Activated CD4-positive, alpha-beta memory T cell treated with anti-CD3 and anti-CD28 coated beads, Interleukin-2, amount 10 ng/mL, durations not matched to agents 7 days and 5 days (primary cell): ENCODE measurements at regions of chr16 and their contacts with region 1.

Region 1: DNA sequence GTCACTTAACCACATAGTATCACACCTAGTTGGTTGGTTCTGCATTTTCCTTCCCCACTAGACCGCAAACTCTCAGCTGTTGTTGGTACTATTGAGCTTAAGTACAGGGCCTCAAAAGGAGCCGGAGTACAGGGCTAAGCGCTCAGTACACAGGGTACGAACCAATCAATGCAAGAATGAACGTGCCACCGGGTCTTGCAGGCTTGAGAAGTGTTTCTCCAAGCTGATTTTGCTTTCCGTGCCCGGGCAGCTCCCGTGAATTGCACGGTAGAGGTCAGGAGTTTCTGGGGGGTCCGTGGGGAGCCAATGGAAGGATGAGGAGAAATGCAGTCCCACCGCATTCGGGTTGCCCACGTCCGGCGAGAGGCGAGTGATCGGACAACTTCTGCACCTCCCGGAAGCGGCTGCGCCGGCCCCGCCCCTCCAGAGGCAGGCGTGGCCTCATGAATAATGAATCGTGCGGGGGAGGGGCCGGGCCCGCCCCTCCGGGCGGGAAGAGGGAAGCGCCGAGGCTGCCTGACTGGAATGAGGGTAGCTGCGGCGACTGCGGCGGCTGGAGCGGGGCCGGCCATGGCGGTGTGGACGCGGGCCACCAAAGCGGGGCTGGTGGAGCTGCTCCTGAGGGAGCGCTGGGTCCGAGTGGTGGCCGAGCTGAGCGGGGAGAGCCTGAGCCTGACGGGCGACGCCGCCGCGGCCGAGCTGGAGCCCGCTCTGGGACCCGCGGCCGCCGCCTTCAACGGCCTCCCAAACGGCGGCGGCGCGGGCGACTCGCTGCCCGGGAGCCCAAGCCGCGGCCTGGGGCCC is at the start of gene SNTB2:
- DNase-seq: peak; percentile 90
- H3K4me3 Mint-ChIP-seq: peak within 1 kb of the TSS; percentile 99
- H3K27ac Mint-ChIP-seq: peak within 1 kb of the TSS; percentile 100
- H3K4me1 Mint-ChIP-seq: peaks cover 46% of the 10 kb centered on the region
- H3K27me3 Mint-ChIP-seq: no peaks in the 10 kb centered on the region
- total RNA-seq, gene SNTB2: 23.3 to 25.9 TPM

Region 2: GRCh38 chr16:69064764-69065313 is 122.0 kb before region 1 on chr16:
- CTCF ChIA-PET with region 1: no interaction called
- POLR2A ChIA-PET with region 1: no interaction called
- DNase-seq: no peak
- H3K4me3 Mint-ChIP-seq: no peak overlapping the region
- H3K27ac Mint-ChIP-seq: no peak overlapping the region
- H3K4me1 Mint-ChIP-seq: no peaks in the 10 kb centered on the region
- H3K27me3 Mint-ChIP-seq: no peaks in the 10 kb centered on the region

Region 3: GRCh38 chr16:69132424-69133252 is 54.2 kb before region 1 on chr16 and contains the starts of genes CHTF8 and UTP4:
- CTCF ChIA-PET with region 1: interaction called, 4 read pairs
- POLR2A ChIA-PET with region 1: interaction called, 28 read pairs
- DNase-seq: peak; percentile 88
- H3K4me3 Mint-ChIP-seq: peak within 1 kb of the TSS; percentile 93
- H3K27ac Mint-ChIP-seq: peak within 1 kb of the TSS; percentile 81
- H3K4me1 Mint-ChIP-seq: peaks cover 59% of the 10 kb centered on the region
- H3K27me3 Mint-ChIP-seq: no peaks in the 10 kb centered on the region
- total RNA-seq, gene CHTF8: 133 to 138 TPM
- total RNA-seq, gene UTP4: 39.7 to 48.7 TPM

Region 4: DNA sequence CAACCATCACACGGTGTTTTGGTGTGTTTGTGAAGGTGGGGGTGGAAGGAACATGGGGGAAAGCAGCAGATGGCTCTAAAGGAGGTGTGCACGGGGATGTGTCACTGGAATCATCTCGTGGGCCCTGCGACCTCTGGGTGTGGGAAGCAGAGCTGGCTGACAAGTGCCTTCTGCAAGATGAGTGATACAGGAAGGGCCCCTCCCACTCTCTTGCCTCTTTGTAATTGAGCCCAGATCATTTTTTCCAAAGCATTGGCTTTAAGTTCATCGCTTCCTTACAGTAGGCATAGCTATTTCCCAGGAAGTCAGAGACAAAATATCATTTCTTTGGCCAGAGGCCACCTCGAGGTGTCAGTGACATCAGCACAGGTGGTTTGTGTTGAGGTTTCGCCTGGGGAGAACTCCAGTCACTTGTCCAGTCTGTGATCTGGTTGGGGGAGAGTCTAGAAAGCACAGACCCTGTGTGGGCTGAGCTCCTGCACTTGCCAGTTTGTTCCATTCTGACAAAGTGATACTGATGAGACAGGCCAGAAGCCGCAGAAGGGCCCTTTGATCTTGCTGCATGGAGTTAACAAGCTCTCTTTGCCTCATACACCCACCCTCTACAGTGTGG is 20.5 kb before region 1 on chr16:
- CTCF ChIA-PET with region 1: interaction called, 9 read pairs
- POLR2A ChIA-PET with region 1: interaction called, 33 read pairs
- DNase-seq: peak; percentile 48
- H3K4me3 Mint-ChIP-seq: no peak overlapping the region
- H3K27ac Mint-ChIP-seq: peak overlapping the region; percentile 69
- H3K4me1 Mint-ChIP-seq: peaks cover 37% of the 10 kb centered on the region
- H3K27me3 Mint-ChIP-seq: no peaks in the 10 kb centered on the region

Region 5: DNA sequence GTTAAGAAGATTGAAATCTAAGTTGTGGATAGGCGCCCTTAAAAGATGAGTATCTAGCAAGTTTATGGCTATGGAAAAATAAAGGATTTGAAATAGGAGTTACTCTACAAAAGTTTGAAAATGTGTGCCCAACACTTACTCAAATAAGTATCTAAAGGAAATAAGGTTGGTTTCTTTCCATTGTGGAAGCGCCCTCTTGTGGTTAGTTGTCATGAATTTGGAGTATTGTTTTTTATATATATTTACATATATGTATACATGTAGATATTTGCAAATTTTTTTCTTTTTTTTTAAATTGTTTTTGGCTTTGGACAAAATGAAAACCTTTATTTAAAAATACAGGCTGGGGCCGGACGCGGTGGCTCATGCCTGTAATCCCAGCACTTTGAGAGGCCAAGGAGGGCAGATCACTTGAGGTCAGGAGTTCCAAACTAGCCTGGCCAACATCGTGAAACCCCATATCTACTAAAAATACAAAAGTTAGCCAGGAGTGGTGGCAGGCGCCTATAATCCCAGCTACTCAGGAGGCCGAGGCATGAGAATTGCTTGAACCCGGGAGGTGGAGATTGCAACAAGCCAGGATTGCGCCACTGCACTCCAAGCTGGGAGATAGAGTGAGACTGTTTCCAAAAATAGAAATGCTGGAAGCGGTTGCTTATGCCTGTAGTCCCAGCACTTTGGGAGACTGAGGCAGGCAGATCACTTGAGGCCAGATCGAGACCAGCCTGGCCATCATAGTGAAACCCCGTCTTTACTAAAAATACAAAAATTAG is 100.3 kb after region 1 on chr16:
- CTCF ChIA-PET with region 1: interaction called, 10 read pairs
- POLR2A ChIA-PET with region 1: interaction called, 3 read pairs
- DNase-seq: no peak
- H3K4me3 Mint-ChIP-seq: no peak overlapping the region
- H3K27ac Mint-ChIP-seq: no peak overlapping the region
- H3K4me1 Mint-ChIP-seq: peaks cover 2% of the 10 kb centered on the region
- H3K27me3 Mint-ChIP-seq: no peaks in the 10 kb centered on the region

Region 6: GRCh38 chr16:69310653-69311532 is 124.0 kb after region 1 on chr16 and contains the start of gene VPS4A:
- CTCF ChIA-PET with region 1: interaction called, 4 read pairs
- POLR2A ChIA-PET with region 1: interaction called, 16 read pairs
- DNase-seq: peak; percentile 97
- H3K4me3 Mint-ChIP-seq: peak within 1 kb of the TSS; percentile 94
- H3K27ac Mint-ChIP-seq: peak within 1 kb of the TSS; percentile 90
- H3K4me1 Mint-ChIP-seq: peaks cover 24% of the 10 kb centered on the region
- H3K27me3 Mint-ChIP-seq: no peaks in the 10 kb centered on the region
- total RNA-seq, gene VPS4A: 32.3 to 34.9 TPM